ENCODE measurements at regions of chr9 and their contacts with region 1.

Region 1: GRCh38 chr9:34633851-34634550 is 3.6 kb downstream of the SIGMAR1 start:
- DNase-seq: peak in 4 of 5 donors; percentile 46 to 78 (median 67)
- ATAC-seq: peak in 3 of 4 donors; percentile 14 to 29 (median 19)
- H3K4me3 ChIP-seq: no peak overlapping the region
- H3K27ac ChIP-seq: no peak overlapping the region
- H3K4me1 ChIP-seq: peaks cover 0 to 32% (median 22%) of the 10 kb centered on the region in 12 donors
- H3K27me3 ChIP-seq: peaks cover 0 to 18% (median 8%) of the 10 kb centered on the region in 9 donors
- CTCF ChIP-seq: peak; percentile 74 to 92 (median 84)
- POLR2A ChIP-seq: no peak

Region 2: GRCh38 chr9:34611829-34612630 is 22.0 kb before region 1 on chr9 and contains the start of gene RPP25L:
- intact Hi-C with region 1: loop called in 7 of 10 experiments (anchors 1 to 2 kb)
- DNase-seq: peak; percentile 90 to 95 (median 92)
- ATAC-seq: peak; percentile 93 to 97 (median 96)
- H3K4me3 ChIP-seq: peak within 1 kb of the TSS; percentile 64 to 95 (median 82)
- H3K27ac ChIP-seq: peak within 1 kb of the TSS; percentile 81 to 97 (median 93)
- H3K4me1 ChIP-seq: peaks cover 0 to 29% (median 24%) of the 10 kb centered on the region in 12 donors
- H3K27me3 ChIP-seq: no peaks in the 10 kb centered on the region
- CTCF ChIP-seq: no peak
- POLR2A ChIP-seq: peak in 1 of 2 donors; percentile 95
- total RNA-seq, gene RPP25L: 22.5 to 79.2 (median 38.3) TPM

Region 3: GRCh38 chr9:34974664-34975063 is 340.7 kb after region 1 on chr9:
- intact Hi-C with region 1: no loop called
- DNase-seq: no peak
- ATAC-seq: no peak
- H3K4me3 ChIP-seq: no peak overlapping the region
- H3K27ac ChIP-seq: no peak overlapping the region
- H3K4me1 ChIP-seq: no peaks in the 10 kb centered on the region
- H3K27me3 ChIP-seq: peaks cover 0 to 3% (median 0%) of the 10 kb centered on the region in 9 donors
- CTCF ChIP-seq: no peak
- POLR2A ChIP-seq: no peak